ENCODE measurements at regions of chr17 and their contacts with region 1.

Region 1: DNA sequence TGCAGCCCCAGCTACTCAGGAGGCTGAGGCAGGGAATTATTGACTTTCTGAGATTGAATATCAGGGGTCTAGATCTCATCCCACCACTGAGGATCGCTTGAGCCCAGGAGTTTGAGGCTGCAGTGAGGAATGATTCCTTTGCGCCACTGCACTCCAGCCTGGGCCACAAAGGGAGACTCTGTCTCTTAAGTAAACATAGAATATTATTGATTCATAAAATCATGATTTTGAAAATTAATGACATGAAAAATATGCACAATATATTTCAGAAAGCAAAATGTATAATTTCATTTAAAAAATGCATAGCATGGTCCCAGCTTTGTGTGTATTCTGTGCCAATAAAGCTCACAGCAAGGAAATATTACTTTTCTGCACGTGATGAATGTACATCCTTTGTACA is 1.6 kb upstream of the VPS53 start:
- H3K4me3 Mint-ChIP-seq: no peak overlapping the region
- H3K27ac Mint-ChIP-seq: no peak overlapping the region
- H3K4me1 Mint-ChIP-seq: peaks cover 16% of the 10 kb centered on the region
- H3K27me3 Mint-ChIP-seq: peaks cover 7% of the 10 kb centered on the region

Region 2: DNA sequence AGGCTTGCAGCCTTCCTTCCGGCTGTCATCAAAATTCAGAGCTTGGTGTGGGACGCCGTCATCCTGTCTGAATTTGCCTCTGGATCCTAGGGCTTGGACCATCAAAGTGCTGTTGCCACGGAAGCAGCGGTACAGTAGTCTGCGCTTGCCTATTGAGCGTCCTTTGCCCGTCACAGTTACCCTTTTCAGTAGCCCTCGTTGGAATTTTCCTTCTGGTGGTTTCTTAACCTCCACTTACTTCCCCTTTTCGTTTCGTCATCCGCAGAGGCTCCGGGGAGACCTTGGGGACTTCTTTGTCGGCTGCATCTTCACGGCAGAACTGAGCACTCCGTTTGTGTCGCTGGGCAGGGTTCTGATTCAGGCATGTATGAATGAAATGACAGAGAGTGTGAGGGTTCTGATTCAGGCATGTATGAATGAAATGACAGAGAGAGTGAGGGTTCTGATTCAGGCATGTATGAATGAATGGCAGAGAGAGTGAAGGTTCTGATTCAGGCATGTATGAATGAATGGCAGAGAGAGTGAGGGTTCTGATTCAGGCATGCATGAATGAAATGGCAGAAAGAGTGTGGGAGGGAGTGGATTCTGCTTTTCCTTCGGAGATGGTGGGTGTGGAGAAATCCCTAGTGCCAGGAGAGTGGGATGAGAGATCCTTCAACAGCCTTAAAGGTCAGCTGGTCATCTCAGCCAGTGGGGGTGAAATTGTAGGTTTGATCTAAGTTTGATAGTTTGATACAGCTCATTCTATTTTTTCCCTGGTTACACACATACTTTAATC is 24.2 kb after region 1 on chr17:
- intact Hi-C with region 1: loop called (anchors 1 kb)
- H3K4me3 Mint-ChIP-seq: peak overlapping the region; percentile 50
- H3K27ac Mint-ChIP-seq: peak overlapping the region; percentile 80
- H3K4me1 Mint-ChIP-seq: peaks cover 15% of the 10 kb centered on the region
- H3K27me3 Mint-ChIP-seq: peaks cover 2% of the 10 kb centered on the region

Region 3: DNA sequence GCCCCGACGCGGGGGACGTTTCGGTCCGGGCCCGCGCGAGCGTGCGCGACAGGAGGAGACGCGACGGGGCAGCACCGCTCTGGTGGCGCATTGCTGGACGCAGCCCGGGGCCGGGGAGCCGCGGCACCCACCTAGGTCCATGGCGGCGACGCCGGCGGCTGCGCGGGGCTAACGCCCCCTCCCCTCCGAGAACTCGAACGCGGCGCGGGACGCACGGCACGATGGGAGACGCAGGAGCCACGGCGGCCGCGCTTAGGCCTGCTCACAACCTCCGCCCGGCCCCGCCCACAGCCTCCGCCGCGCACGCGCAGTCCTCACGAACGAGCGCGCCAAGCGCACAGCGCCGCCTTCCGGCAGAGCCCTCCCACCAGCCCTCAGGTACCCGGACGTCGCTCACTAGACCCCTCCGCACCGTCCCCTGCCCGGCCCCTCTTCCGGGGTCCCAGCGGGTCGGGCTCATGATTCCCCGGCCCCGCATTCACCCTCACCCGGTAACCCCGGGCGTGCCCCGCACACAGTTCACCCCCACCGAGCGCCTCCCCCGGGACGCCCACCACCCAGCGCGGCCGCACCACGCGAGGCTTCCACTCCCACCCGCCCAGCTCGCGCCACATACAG is 35.9 kb after region 1 on chr17 and contains the start of gene GEMIN4:
- intact Hi-C with region 1: loop called (anchors 1 kb)
- H3K4me3 Mint-ChIP-seq: peak within 1 kb of the TSS; percentile 86
- H3K27ac Mint-ChIP-seq: peak within 1 kb of the TSS; percentile 86
- H3K4me1 Mint-ChIP-seq: peaks cover 38% of the 10 kb centered on the region
- H3K27me3 Mint-ChIP-seq: peaks cover 5% of the 10 kb centered on the region